Endothelial cell of umbilical vein (primary cell): ENCODE measurements at regions of chr1 and their contacts with region 1.

Region 1: GRCh38 chr1:214602764-214603657 is at the start of gene CENPF:
- DNase-seq: peak; percentile 99
- H3K4me3 ChIP-seq: peak within 1 kb of the TSS; percentile 80 to 93 (median 80)
- H3K27ac ChIP-seq: peak within 1 kb of the TSS; percentile 56
- H3K4me1 ChIP-seq: peaks cover 11% of the 10 kb centered on the region
- H3K27me3 ChIP-seq: no peaks in the 10 kb centered on the region
- CTCF ChIP-seq: peak in 1 of 2 donors; percentile 30
- POLR2A ChIP-seq: peak; percentile 59
- total RNA-seq, gene CENPF: 66.2 and 72.9 TPM in 2 replicates

Region 2: DNA sequence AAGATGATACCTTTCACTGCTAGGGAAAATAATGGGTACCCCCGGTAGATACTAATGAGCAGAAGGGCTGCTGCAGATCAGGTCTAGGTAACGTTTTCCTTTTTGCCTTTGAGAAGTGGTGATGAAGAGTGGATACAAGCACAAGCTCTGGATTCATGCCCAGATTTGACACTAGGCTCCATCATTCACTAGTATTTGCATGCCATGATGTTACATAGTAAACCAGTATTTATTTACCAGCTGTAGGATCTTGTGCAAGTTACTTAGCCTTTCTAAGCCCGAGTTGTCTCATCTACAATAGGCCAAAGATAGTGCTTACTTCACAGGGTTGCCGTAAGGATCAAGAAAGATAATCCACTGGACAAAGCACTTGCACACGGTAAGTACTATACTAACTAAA is 65.8 kb before region 1 on chr1:
- CTCF ChIA-PET with region 1: no interaction called
- POLR2A ChIA-PET with region 1: no interaction called
- dilution Hi-C with region 1: no loop called
- intact Hi-C with region 1: no loop called
- DNase-seq: no peak
- H3K4me3 ChIP-seq: no peak overlapping the region
- H3K27ac ChIP-seq: no peak overlapping the region
- H3K4me1 ChIP-seq: peaks cover 15% of the 10 kb centered on the region
- H3K27me3 ChIP-seq: no peaks in the 10 kb centered on the region
- CTCF ChIP-seq: no peak
- POLR2A ChIP-seq: no peak

Region 3: DNA sequence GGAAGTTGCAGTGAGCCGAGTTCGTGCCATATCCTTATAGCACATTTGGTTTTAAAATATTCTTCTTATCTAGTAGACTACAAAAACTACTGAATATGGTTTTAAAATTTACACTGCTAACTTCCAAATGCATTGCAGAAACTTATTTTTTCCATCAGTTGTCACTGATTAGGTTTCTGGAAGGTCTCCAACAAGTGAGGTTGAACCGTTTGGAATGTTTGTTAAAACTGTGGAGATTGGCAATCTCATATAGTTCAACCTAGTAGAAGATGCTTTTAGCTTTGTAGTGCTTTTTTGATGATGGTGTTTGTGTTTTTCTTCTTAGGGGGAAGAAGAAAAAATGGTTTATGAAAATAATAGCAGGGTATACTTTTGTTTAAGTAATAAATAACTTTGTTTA is 12.9 kb after region 1 on chr1:
- CTCF ChIA-PET with region 1: interaction called, 7 read pairs
- POLR2A ChIA-PET with region 1: no interaction called
- dilution Hi-C with region 1: no loop called
- intact Hi-C with region 1: loop called (anchors 1 kb)
- DNase-seq: peak; percentile 20
- H3K4me3 ChIP-seq: no peak overlapping the region
- H3K27ac ChIP-seq: no peak overlapping the region
- H3K4me1 ChIP-seq: peaks cover 26% of the 10 kb centered on the region
- H3K27me3 ChIP-seq: no peaks in the 10 kb centered on the region
- CTCF ChIP-seq: no peak
- POLR2A ChIP-seq: no peak

Region 4: GRCh38 chr1:214707306-214708087 is 104.5 kb after region 1 on chr1:
- CTCF ChIA-PET with region 1: no interaction called
- POLR2A ChIA-PET with region 1: no interaction called
- dilution Hi-C with region 1: no loop called
- intact Hi-C with region 1: no loop called
- DNase-seq: no peak
- H3K4me3 ChIP-seq: no peak overlapping the region
- H3K27ac ChIP-seq: no peak overlapping the region
- H3K4me1 ChIP-seq: no peaks in the 10 kb centered on the region
- H3K27me3 ChIP-seq: no peaks in the 10 kb centered on the region
- CTCF ChIP-seq: no peak
- POLR2A ChIP-seq: no peak